Heart right ventricle (tissue), 16 donors: ENCODE measurements at regions of chr5 and their contacts with region 1.

Region 1: GRCh38 chr5:10301842-10302610 is 5.7 kb downstream of the CMBL start:
- DNase-seq: peak; percentile 84 to 85
- ATAC-seq: peak; percentile 86 to 98 (median 94)
- H3K4me3 ChIP-seq: peak overlapping the region in 5 of 10 donors; percentile 18 to 39 (median 34)
- H3K27ac ChIP-seq: peak overlapping the region; percentile 52 to 83 (median 72)
- H3K4me1 ChIP-seq: peaks cover 0 to 55% (median 18%) of the 10 kb centered on the region in 9 donors
- H3K27me3 ChIP-seq: peaks cover 0 to 5% (median 0%) of the 10 kb centered on the region in 7 donors
- CTCF ChIP-seq: no peak

Region 2: GRCh38 chr5:10333154-10334006 is 31.4 kb after region 1 on chr5:
- intact Hi-C with region 1: loop called in 1 of 10 experiments (anchors 2 kb)
- DNase-seq: peak in 1 of 2 donors; percentile 59
- ATAC-seq: peak; percentile 54 to 72 (median 63)
- H3K4me3 ChIP-seq: peak overlapping the region; percentile 26 to 86 (median 60)
- H3K27ac ChIP-seq: peak overlapping the region; percentile 46 to 90 (median 82)
- H3K4me1 ChIP-seq: peaks cover 10 to 65% (median 45%) of the 10 kb centered on the region in 9 donors
- H3K27me3 ChIP-seq: peaks cover 0 to 34% (median 13%) of the 10 kb centered on the region in 7 donors
- CTCF ChIP-seq: peak in 6 of 9 donors; percentile 7 to 45 (median 26)

Region 3: GRCh38 chr5:10632110-10632761 is 330.2 kb after region 1 on chr5:
- intact Hi-C with region 1: no loop called
- DNase-seq: no peak
- ATAC-seq: no peak
- H3K4me3 ChIP-seq: peak overlapping the region in 1 of 10 donors; percentile 19
- H3K27ac ChIP-seq: peak overlapping the region in 1 of 10 donors; percentile 27
- H3K4me1 ChIP-seq: peaks cover 3 to 63% (median 11%) of the 10 kb centered on the region in 9 donors
- H3K27me3 ChIP-seq: peaks cover 0 to 6% (median 0%) of the 10 kb centered on the region in 7 donors
- CTCF ChIP-seq: no peak